ENCODE measurements at regions of chr2 and their contacts with region 1.

Region 1: DNA sequence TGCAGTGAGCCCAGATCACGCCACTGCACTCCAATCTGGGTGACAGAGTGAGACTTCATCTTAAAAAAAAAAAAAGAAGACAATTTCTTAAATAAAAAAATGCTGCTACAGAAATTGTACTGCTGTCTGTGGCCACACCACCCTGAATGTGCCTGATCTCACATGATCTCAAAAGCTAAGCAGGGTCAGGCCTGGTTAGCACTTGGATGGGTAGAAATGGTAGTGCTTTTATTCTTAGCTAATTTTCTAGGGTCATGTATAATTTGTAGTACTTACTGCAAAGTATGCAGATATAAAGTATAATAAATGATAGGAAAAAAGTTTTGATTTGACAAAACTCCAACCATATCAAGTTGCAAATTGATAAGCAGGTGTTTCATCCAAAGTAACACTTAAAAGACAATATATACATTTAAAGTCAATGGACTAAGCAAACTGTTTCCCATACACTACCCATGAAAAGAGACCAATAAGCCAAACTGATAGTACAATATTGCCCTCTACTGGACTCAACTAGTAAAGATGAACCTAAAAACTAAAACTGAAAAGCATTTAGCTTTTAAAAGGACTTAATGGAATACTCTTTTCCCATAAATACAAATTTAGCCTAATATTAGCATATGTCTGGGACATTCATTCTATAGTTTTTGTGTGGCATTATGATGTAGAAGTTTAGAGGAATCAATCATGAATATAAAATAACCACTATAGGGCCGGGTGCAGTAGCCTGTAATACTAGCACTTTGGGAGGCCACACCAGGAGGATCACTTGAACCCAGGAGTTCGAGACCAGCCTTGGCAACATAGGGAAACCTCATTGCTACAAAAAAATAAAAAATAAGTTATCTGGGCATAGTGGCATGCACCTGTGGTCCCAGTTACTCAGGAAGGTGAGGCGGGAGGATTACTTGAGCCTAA is 18.6 kb upstream of the PEX13 start:
- DNase-seq: no peak
- H3K4me3 ChIP-seq: no peak overlapping the region
- H3K27ac ChIP-seq: no peak overlapping the region
- H3K4me1 ChIP-seq: no peaks in the 10 kb centered on the region
- H3K27me3 ChIP-seq: no peaks in the 10 kb centered on the region
- CTCF ChIP-seq: peak; percentile 89

Region 2: GRCh38 chr2:60707750-60708371 is 291.0 kb before region 1 on chr2:
- CTCF ChIA-PET with region 1: interaction called, 3 read pairs
- POLR2A ChIA-PET with region 1: no interaction called
- intact Hi-C with region 1: loop called (anchors 1 kb)
- DNase-seq: peak in 1 of 2 experiments; percentile 53
- H3K4me3 ChIP-seq: no peak overlapping the region
- H3K27ac ChIP-seq: no peak overlapping the region
- H3K4me1 ChIP-seq: no peaks in the 10 kb centered on the region
- H3K27me3 ChIP-seq: no peaks in the 10 kb centered on the region
- CTCF ChIP-seq: peak; percentile 94

Region 3: DNA sequence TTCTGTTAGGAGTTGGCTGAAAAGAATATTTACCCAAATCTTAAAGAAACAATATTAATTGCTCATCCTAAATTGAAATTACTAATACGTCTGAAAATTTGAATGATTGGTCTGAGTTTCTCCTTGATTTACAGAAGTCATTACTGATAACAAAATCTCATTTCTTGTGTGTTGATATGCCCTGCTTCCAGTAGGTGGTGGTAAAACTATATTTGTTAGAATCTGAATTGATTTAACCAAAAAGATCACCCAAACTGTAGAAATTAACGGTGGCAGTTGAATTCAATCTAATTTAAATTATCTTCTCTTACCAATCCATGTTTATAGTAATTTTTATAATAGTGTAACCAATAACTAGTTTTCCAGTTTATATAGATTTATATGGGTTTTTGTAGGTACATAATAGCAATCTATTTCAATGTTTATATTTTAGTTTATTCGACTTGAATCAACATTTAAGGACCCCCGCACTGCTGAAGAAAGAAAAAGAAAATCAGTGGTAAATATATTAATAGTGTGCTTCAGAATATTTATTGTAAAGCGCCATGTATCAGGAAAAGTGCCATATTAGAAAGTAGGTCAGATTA is 204.5 kb before region 1 on chr2:
- CTCF ChIA-PET with region 1: no interaction called
- POLR2A ChIA-PET with region 1: no interaction called
- intact Hi-C with region 1: loop called (anchors 1 kb)
- DNase-seq: no peak
- H3K4me3 ChIP-seq: no peak overlapping the region
- H3K27ac ChIP-seq: no peak overlapping the region
- H3K4me1 ChIP-seq: no peaks in the 10 kb centered on the region
- H3K27me3 ChIP-seq: no peaks in the 10 kb centered on the region
- CTCF ChIP-seq: peak; percentile 79

Region 4: DNA sequence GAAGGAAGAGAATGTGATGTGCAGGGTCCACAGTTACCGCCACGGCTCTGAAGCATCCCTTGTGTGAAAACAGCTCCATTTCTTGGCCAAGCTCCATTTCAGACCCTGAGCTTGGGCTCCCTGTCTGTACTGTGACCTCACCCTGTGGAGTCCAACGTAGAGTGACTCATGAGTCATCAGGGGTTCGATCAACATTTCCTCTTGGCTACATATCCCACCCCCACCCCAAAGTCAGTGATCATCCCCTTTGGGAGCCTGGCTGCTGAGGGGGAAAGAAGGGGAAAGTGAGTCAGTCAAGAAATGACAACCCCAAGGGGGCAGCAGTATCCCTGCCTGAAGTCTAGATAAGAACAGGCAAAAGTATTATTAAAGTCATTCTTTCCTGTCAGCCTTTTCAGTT is 180.6 kb before region 1 on chr2:
- CTCF ChIA-PET with region 1: no interaction called
- POLR2A ChIA-PET with region 1: interaction called, 3 read pairs
- intact Hi-C with region 1: loop called (anchors 1 kb)
- DNase-seq: no peak
- H3K4me3 ChIP-seq: no peak overlapping the region
- H3K27ac ChIP-seq: no peak overlapping the region
- H3K4me1 ChIP-seq: no peaks in the 10 kb centered on the region
- H3K27me3 ChIP-seq: peaks cover 7% of the 10 kb centered on the region; the same call in 1 of the 2 replicates
- CTCF ChIP-seq: peak; percentile 39

Region 5: DNA sequence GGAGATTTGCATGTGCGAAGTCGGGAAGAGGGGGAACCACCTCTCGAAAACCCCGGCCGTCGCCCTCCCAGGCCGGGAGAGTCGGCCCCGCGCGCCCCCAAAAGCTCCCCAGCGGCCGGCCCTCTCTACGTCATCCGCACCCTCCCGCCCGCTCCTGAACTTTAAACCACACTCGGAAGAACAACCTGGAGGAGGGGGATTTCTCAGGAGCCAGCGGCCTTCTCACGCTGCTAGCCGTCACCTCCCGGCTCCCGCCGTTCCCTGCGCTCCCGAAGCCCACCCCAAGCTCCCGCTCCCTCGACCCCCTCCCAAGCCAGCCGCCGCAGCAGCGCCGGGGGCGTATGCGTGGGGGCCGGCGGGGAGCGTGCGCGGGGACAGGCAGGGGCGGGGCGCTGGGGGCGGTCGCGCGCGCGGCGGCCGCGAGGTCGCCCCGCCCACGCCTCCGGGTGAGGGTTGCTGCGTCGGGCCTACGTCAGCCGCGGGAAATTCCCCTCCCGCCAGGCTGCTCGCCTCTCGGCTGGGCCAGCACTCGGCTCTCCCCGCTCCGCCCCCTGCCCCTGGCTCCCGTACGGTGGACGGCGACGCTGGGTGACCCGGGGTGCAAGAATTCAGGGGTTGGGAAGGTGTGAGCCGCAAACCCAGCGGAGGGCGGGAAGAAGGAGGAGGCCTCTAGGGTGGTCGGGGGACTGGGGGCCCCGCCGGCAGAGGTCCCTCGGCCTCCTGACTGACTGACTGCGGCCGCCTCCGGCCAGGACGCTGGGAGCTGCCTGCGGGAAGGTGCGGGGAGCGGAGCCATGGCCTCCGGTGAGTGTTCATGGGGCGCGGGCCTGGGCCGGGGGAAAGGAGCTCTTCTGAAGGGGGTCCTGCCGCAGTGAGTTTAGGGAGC is 117.6 kb before region 1 on chr2 and contains the start of gene REL:
- CTCF ChIA-PET with region 1: interaction called, 5 read pairs
- POLR2A ChIA-PET with region 1: no interaction called
- intact Hi-C with region 1: loop called (anchors 5 kb)
- DNase-seq: peak; percentile 74 to 92
- H3K4me3 ChIP-seq: peak within 1 kb of the TSS; percentile 78
- H3K27ac ChIP-seq: peak within 1 kb of the TSS; percentile 83
- H3K4me1 ChIP-seq: peaks cover 36% of the 10 kb centered on the region
- H3K27me3 ChIP-seq: no peaks in the 10 kb centered on the region
- CTCF ChIP-seq: no peak
- total RNA-seq, gene REL: 12.5 and 13.3 TPM in 2 replicates

Region 6: DNA sequence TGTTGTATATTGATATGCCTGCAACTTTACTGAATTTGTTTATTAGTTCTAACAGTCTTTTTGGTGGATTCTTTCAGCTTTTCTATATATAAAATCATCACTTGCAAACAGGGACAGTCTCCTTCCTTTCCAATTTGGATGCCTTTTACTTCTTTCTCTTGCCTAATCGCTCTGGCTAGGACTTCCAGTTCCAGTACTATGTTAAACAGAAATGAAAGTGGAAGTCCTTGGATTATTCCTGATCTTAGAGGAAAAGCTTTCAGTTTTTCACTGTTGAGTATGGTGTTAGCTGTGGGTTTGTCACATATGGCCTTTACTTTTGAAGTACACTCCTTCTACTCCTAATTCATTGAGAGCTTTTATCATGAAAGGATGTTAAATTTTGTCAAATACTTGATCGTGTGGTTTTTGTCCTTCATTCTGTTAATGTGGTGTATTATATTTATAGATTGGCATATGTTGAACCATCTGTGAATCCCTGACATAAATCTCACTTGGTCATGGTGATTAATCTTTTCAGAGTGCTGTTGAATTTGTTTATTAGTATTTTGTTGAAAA is 64.6 kb before region 1 on chr2:
- CTCF ChIA-PET with region 1: no interaction called
- POLR2A ChIA-PET with region 1: no interaction called
- intact Hi-C with region 1: no loop called
- DNase-seq: no peak
- H3K4me3 ChIP-seq: no peak overlapping the region
- H3K27ac ChIP-seq: no peak overlapping the region
- H3K4me1 ChIP-seq: no peaks in the 10 kb centered on the region
- H3K27me3 ChIP-seq: no peaks in the 10 kb centered on the region
- CTCF ChIP-seq: no peak

Region 7: DNA sequence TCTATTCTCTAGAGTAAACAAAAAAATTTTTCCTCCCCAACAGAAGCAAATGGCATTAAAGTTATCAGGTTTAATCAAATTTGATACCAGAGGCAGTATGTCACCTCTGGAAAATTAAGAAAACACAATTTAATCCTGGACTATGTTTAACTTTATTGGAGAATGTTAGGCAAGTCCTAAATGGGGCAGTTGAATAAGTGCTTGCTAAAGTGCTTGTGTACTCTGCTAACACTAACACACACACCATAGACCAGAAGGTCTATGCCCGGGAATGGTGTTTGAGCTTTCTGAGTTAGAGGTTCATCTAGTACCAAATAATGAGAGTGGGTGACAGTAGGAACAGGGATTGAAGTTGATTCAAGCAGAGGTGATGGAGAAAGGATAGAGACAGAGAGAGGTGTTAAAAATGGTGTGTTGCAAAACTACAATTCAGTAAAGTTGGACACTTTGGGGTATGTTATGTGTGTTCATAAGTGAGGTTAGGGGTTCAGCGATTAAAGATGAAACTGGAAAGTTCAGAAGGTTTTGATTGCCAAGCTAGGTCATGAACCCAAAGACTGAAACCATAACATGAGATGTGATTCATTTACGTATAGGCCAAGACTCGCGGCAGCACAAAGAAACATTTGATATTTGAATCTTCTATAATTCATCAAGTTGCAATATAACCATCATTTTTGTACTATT is 21.9 kb before region 1 on chr2:
- CTCF ChIA-PET with region 1: no interaction called
- POLR2A ChIA-PET with region 1: no interaction called
- intact Hi-C with region 1: no loop called
- DNase-seq: no peak
- H3K4me3 ChIP-seq: no peak overlapping the region
- H3K27ac ChIP-seq: no peak overlapping the region
- H3K4me1 ChIP-seq: no peaks in the 10 kb centered on the region
- H3K27me3 ChIP-seq: no peaks in the 10 kb centered on the region
- CTCF ChIP-seq: no peak

Region 8: DNA sequence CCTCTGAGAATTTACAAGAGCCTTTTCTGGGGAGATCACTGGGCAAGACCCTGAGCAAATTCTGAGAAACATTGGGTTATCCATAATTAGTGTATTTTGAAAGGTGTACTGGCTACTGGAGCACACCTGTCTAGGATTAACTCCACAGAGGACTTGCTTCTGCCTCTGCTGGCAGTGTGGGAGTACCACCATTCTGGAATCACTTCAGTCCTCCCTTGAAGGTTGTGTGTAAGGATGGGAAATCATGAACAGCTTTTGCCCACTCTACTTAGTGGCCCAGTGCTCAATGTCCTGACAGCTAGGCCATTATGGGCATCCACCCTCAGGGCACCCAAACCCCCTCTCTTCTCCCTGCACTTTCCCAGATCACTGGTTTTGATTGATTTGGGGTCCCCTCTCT is 58.7 kb after region 1 on chr2:
- CTCF ChIA-PET with region 1: no interaction called
- POLR2A ChIA-PET with region 1: no interaction called
- intact Hi-C with region 1: no loop called
- DNase-seq: no peak
- H3K4me3 ChIP-seq: no peak overlapping the region
- H3K27ac ChIP-seq: no peak overlapping the region
- H3K4me1 ChIP-seq: no peaks in the 10 kb centered on the region
- H3K27me3 ChIP-seq: no peaks in the 10 kb centered on the region
- CTCF ChIP-seq: no peak